ENCODE measurements at regions of chr2 and their contacts with region 1.

Region 1: DNA sequence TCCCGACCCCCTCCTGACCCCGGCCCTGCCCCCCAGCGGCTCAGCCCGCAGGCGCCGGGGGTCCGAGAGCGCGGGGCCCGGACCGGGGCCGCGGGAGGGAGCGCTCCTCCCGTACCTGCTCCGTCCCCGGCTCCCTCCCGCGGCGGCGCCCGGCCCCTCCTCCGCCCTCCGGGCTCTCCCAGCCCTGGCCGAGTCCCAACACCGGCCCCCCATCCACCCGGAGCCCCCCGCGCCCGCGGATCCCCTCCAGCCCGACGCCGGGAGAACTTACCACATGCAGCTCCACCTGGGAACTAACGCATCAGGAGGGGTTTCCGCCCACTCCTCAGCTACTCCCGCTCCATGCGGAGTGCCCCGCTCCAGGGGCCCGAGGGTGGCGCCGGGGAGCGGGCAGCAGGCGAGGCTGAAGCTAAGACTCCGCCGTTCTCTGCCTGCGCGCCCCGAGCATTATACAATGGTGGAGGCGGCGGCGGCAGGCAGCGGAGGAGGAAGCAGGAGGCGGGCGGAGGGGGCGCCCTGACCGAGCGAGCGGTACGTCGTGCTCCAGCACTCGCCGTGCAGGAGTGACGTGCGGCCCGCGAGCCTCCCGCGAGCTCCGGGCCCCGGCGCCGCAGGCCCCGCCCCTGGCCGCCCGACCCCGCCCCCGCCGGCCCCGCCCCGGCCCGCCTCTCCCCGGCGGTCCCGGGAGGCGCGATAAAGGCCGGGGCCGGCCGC is at the start of gene SERTAD2:
- DNase-seq: peak; percentile 73 to 96 (median 86)
- ATAC-seq: peak; percentile 87
- H3K4me3 ChIP-seq: peak within 1 kb of the TSS; percentile 91
- H3K4me3 Mint-ChIP-seq: peak within 1 kb of the TSS; percentile 94
- H3K27ac ChIP-seq: peak within 1 kb of the TSS; percentile 82 to 94
- H3K27ac Mint-ChIP-seq: peak within 1 kb of the TSS; percentile 91
- H3K4me1 ChIP-seq: peaks cover 38% of the 10 kb centered on the region
- H3K4me1 Mint-ChIP-seq: peaks cover 84% of the 10 kb centered on the region
- H3K27me3 ChIP-seq: no peaks in the 10 kb centered on the region
- H3K27me3 Mint-ChIP-seq: no peaks in the 10 kb centered on the region
- CTCF ChIP-seq: peak; percentile 27
- total RNA-seq, gene SERTAD2: 50.5 to 54.1 TPM

Region 2: GRCh38 chr2:64523666-64524603 is 129.6 kb before region 1 on chr2 and contains the start of gene AFTPH:
- CTCF ChIA-PET with region 1: interaction called, 11 read pairs
- POLR2A ChIA-PET with region 1: interaction called, 47 read pairs
- intact Hi-C with region 1: loop called (anchors 5 kb)
- DNase-seq: peak; percentile 98 to 100 (median 99)
- ATAC-seq: peak; percentile 90
- H3K4me3 ChIP-seq: peak within 1 kb of the TSS; percentile 89
- H3K4me3 Mint-ChIP-seq: peak within 1 kb of the TSS; percentile 100
- H3K27ac ChIP-seq: peak within 1 kb of the TSS; percentile 72 to 95
- H3K27ac Mint-ChIP-seq: peak within 1 kb of the TSS; percentile 99
- H3K4me1 ChIP-seq: peaks cover 16% of the 10 kb centered on the region
- H3K4me1 Mint-ChIP-seq: peaks cover 47% of the 10 kb centered on the region
- H3K27me3 ChIP-seq: no peaks in the 10 kb centered on the region
- H3K27me3 Mint-ChIP-seq: no peaks in the 10 kb centered on the region
- CTCF ChIP-seq: no peak
- total RNA-seq, gene AFTPH: 24.2 to 24.3 TPM

Region 3: DNA sequence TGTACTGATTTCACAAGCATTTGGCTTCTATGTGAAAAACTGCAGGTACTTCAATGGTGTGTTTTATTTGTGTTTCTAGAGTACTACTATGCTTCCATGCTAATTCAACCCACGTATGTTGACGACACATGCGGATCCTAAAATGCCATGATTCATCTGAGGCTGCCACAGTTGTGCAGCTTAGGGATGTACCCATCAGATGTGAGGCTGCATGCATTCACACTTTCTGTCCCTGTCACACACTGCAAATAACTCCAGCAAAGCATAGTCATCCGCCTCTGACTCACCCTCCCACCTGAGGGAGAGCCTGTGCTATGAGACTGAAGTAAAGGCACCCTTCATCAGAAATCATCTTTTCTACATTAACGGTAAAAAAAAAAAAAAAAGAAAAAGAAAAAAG is 22.4 kb after region 1 on chr2:
- CTCF ChIA-PET with region 1: interaction called, 3 read pairs
- POLR2A ChIA-PET with region 1: interaction called, 45 read pairs
- intact Hi-C with region 1: loop called in 1 of 2 experiments (anchors 5 kb)
- DNase-seq: peak in 8 of 14 experiments; percentile 18 to 63 (median 30)
- ATAC-seq: peak; percentile 91
- H3K4me3 ChIP-seq: no peak overlapping the region
- H3K4me3 Mint-ChIP-seq: no peak overlapping the region
- H3K27ac ChIP-seq: no peak overlapping the region
- H3K27ac Mint-ChIP-seq: peak overlapping the region; percentile 40
- H3K4me1 ChIP-seq: peaks cover 9% of the 10 kb centered on the region
- H3K4me1 Mint-ChIP-seq: peaks cover 56% of the 10 kb centered on the region
- H3K27me3 ChIP-seq: no peaks in the 10 kb centered on the region
- H3K27me3 Mint-ChIP-seq: no peaks in the 10 kb centered on the region
- CTCF ChIP-seq: no peak

Region 4: GRCh38 chr2:64737547-64737946 is 84.0 kb after region 1 on chr2:
- CTCF ChIA-PET with region 1: no interaction called
- POLR2A ChIA-PET with region 1: interaction called, 42 read pairs
- intact Hi-C with region 1: loop called in 1 of 2 experiments (anchors 5 kb)
- DNase-seq: no peak
- ATAC-seq: no peak
- H3K4me3 ChIP-seq: no peak overlapping the region
- H3K4me3 Mint-ChIP-seq: no peak overlapping the region
- H3K27ac ChIP-seq: no peak overlapping the region
- H3K27ac Mint-ChIP-seq: no peak overlapping the region
- H3K4me1 ChIP-seq: no peaks in the 10 kb centered on the region
- H3K4me1 Mint-ChIP-seq: peaks cover 24% of the 10 kb centered on the region
- H3K27me3 ChIP-seq: no peaks in the 10 kb centered on the region
- H3K27me3 Mint-ChIP-seq: no peaks in the 10 kb centered on the region
- CTCF ChIP-seq: no peak

Region 5: GRCh38 chr2:64767670-64768468 is 114.4 kb after region 1 on chr2:
- CTCF ChIA-PET with region 1: interaction called, 10 read pairs
- POLR2A ChIA-PET with region 1: interaction called, 53 read pairs
- intact Hi-C with region 1: loop called in 1 of 2 experiments (anchors 1 kb)
- DNase-seq: peak; percentile 36 to 93 (median 62)
- ATAC-seq: peak; percentile 74
- H3K4me3 ChIP-seq: peak overlapping the region; percentile 63
- H3K4me3 Mint-ChIP-seq: peak overlapping the region; percentile 93
- H3K27ac ChIP-seq: peak overlapping the region; percentile 82 to 85
- H3K27ac Mint-ChIP-seq: peak overlapping the region; percentile 81
- H3K4me1 ChIP-seq: peaks cover 6% of the 10 kb centered on the region
- H3K4me1 Mint-ChIP-seq: peaks cover 22% of the 10 kb centered on the region
- H3K27me3 ChIP-seq: no peaks in the 10 kb centered on the region
- H3K27me3 Mint-ChIP-seq: no peaks in the 10 kb centered on the region
- CTCF ChIP-seq: peak; percentile 37

Region 6: GRCh38 chr2:65056215-65057053 is 402.9 kb after region 1 on chr2 and contains the start of gene CEP68:
- CTCF ChIA-PET with region 1: no interaction called
- POLR2A ChIA-PET with region 1: interaction called, 13 read pairs
- intact Hi-C with region 1: loop called in 1 of 2 experiments (anchors 10 kb)
- DNase-seq: peak; percentile 90 to 98 (median 94)
- ATAC-seq: peak; percentile 89
- H3K4me3 ChIP-seq: peak within 1 kb of the TSS; percentile 87
- H3K4me3 Mint-ChIP-seq: peak within 1 kb of the TSS; percentile 98
- H3K27ac ChIP-seq: peak within 1 kb of the TSS; percentile 45 to 66
- H3K27ac Mint-ChIP-seq: peak within 1 kb of the TSS; percentile 96
- H3K4me1 ChIP-seq: peaks cover 66% of the 10 kb centered on the region
- H3K4me1 Mint-ChIP-seq: peaks cover 69% of the 10 kb centered on the region
- H3K27me3 ChIP-seq: no peaks in the 10 kb centered on the region
- H3K27me3 Mint-ChIP-seq: no peaks in the 10 kb centered on the region
- CTCF ChIP-seq: no peak
- total RNA-seq, gene CEP68: 19.4 to 20.1 TPM